B cell (primary cell): ENCODE measurements at regions of chr14 and their contacts with region 1.

Region 1: GRCh38 chr14:20855652-20856291 is 35.4 kb upstream of the RNASE3 start:
- DNase-seq: peak; percentile 84
- ATAC-seq: peak; percentile 99
- H3K4me3 ChIP-seq: no peak overlapping the region
- H3K4me3 Mint-ChIP-seq: no peak overlapping the region
- H3K27ac ChIP-seq: no peak overlapping the region
- H3K27ac Mint-ChIP-seq: no peak overlapping the region
- H3K4me1 ChIP-seq: peaks cover 3 to 7% of the 10 kb centered on the region in 2 donors
- H3K4me1 Mint-ChIP-seq: peaks cover 11% of the 10 kb centered on the region
- H3K27me3 ChIP-seq: peaks cover 0 to 18% (median 12%) of the 10 kb centered on the region in 4 experiments
- H3K27me3 Mint-ChIP-seq: peaks cover 30% of the 10 kb centered on the region
- CTCF ChIP-seq: peak; percentile 86

Region 2: DNA sequence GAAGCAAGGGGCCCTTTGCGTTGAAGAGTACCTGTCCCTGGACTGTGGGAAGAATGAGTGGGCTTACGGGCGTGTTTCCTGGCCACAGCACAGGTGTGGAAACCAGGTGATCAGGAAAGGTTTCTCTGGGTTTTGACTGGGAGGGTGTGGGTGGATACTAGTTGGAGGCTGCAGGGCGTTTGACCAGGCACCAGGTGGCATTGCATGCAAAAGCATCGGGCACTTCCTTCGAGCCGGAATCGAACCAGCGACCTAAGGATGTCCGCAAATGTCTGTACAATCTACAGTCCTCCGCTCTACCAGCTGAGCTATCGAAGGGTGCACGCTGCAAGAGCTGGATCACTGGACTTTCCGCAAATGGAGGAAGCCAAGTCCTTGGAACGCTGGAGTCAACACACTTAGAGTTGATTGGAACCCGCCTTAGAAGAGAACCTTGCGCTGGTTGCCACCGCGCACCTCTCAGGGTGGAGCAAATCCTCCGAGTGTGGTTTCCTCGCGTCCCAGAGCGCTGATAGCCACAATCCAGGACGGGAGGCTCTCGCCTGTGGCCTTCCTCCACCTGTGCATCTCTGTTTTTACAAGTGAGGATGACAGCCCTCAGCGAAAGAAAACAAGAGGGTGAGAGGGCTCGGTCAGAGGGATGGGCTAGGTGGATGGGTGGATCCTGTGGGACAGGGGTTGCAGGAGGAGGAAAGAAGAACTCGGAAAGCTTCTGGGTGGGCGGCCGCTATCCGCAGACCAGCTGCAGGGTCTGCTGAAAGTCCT is 192.6 kb before region 1 on chr14:
- CTCF ChIA-PET with region 1: interaction called, 8 read pairs
- POLR2A ChIA-PET with region 1: no interaction called
- intact Hi-C with region 1: loop called (anchors 1 kb)
- DNase-seq: peak; percentile 90
- ATAC-seq: peak; percentile 85
- H3K4me3 ChIP-seq: peak overlapping the region; percentile 30 to 93 (median 64)
- H3K4me3 Mint-ChIP-seq: peak overlapping the region; percentile 93
- H3K27ac ChIP-seq: peak overlapping the region in 1 of 2 donors; percentile 34
- H3K27ac Mint-ChIP-seq: peak overlapping the region; percentile 62
- H3K4me1 ChIP-seq: peaks cover 39 to 55% of the 10 kb centered on the region in 2 donors
- H3K4me1 Mint-ChIP-seq: peaks cover 53% of the 10 kb centered on the region
- H3K27me3 ChIP-seq: peaks cover 0 to 7% (median 0%) of the 10 kb centered on the region in 4 experiments
- H3K27me3 Mint-ChIP-seq: no peaks in the 10 kb centered on the region
- CTCF ChIP-seq: peak; percentile 71

Region 3: GRCh38 chr14:20697273-20698017 is 158.3 kb before region 1 on chr14:
- CTCF ChIA-PET with region 1: interaction called, 140 read pairs
- POLR2A ChIA-PET with region 1: no interaction called
- intact Hi-C with region 1: loop called (anchors 1 kb)
- DNase-seq: peak; percentile 81
- ATAC-seq: peak; percentile 86
- H3K4me3 ChIP-seq: no peak overlapping the region
- H3K4me3 Mint-ChIP-seq: no peak overlapping the region
- H3K27ac ChIP-seq: no peak overlapping the region
- H3K27ac Mint-ChIP-seq: no peak overlapping the region
- H3K4me1 ChIP-seq: no peaks in the 10 kb centered on the region
- H3K4me1 Mint-ChIP-seq: peaks cover 6% of the 10 kb centered on the region
- H3K27me3 ChIP-seq: no peaks in the 10 kb centered on the region
- H3K27me3 Mint-ChIP-seq: no peaks in the 10 kb centered on the region
- CTCF ChIP-seq: peak; percentile 88

Region 4: DNA sequence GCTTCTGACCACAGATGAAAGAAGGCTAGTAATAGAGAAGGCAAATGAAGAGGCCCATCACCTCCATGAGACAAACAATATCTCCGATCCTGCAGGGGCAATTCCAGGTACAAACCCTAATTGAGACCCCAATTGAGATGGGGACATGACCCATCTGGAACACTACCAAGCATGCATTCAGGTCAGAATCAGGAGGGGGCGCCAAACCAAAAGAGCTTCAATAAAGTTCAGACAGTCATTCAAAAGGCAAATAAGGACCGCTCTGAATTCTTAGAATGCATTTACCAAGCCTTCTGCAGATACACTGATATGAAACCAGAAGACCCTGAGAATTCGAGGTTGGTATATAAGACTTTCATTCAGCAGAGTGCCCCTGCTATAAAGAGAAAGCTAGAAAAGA is 97.8 kb before region 1 on chr14:
- CTCF ChIA-PET with region 1: interaction called, 51 read pairs
- POLR2A ChIA-PET with region 1: no interaction called
- intact Hi-C with region 1: loop called (anchors 1 kb)
- DNase-seq: peak; percentile 60
- ATAC-seq: peak; percentile 28
- H3K4me3 ChIP-seq: no peak overlapping the region
- H3K4me3 Mint-ChIP-seq: no peak overlapping the region
- H3K27ac ChIP-seq: no peak overlapping the region
- H3K27ac Mint-ChIP-seq: no peak overlapping the region
- H3K4me1 ChIP-seq: no peaks in the 10 kb centered on the region
- H3K4me1 Mint-ChIP-seq: peaks cover 4% of the 10 kb centered on the region
- H3K27me3 ChIP-seq: no peaks in the 10 kb centered on the region
- H3K27me3 Mint-ChIP-seq: peaks cover 4% of the 10 kb centered on the region
- CTCF ChIP-seq: peak; percentile 46

Region 5: DNA sequence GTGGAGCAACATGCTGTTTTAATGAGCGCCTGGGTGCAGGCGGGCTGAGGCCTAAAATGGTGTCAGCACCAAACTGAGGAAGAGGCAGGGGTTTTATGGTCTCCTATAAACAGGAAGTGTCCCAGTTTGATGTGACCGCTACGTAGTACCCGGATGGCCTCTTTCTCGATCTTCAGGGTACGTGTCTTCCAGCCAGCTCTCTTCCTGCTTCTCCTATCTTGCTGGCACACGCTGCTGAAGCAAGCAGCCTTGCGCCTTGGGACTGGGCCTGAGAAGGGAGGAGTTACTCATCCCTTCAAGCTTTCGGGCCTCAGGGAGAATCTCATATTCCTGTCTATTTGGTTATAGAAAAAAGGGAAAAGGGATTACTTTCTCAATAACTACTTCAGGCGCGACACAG is 24.9 kb before region 1 on chr14:
- CTCF ChIA-PET with region 1: no interaction called
- POLR2A ChIA-PET with region 1: no interaction called
- intact Hi-C with region 1: no loop called
- DNase-seq: no peak
- ATAC-seq: no peak
- H3K4me3 ChIP-seq: no peak overlapping the region
- H3K4me3 Mint-ChIP-seq: no peak overlapping the region
- H3K27ac ChIP-seq: no peak overlapping the region
- H3K27ac Mint-ChIP-seq: no peak overlapping the region
- H3K4me1 ChIP-seq: no peaks in the 10 kb centered on the region
- H3K4me1 Mint-ChIP-seq: no peaks in the 10 kb centered on the region
- H3K27me3 ChIP-seq: no peaks in the 10 kb centered on the region
- H3K27me3 Mint-ChIP-seq: peaks cover 6% of the 10 kb centered on the region
- CTCF ChIP-seq: no peak

Region 6: GRCh38 chr14:20866963-20867362 is 11.2 kb after region 1 on chr14:
- CTCF ChIA-PET with region 1: interaction called, 32 read pairs
- POLR2A ChIA-PET with region 1: no interaction called
- intact Hi-C with region 1: no loop called
- DNase-seq: no peak
- ATAC-seq: no peak
- H3K4me3 ChIP-seq: no peak overlapping the region
- H3K4me3 Mint-ChIP-seq: no peak overlapping the region
- H3K27ac ChIP-seq: no peak overlapping the region
- H3K27ac Mint-ChIP-seq: no peak overlapping the region
- H3K4me1 ChIP-seq: no peaks in the 10 kb centered on the region
- H3K4me1 Mint-ChIP-seq: no peaks in the 10 kb centered on the region
- H3K27me3 ChIP-seq: peaks cover 0 to 14% (median 5%) of the 10 kb centered on the region in 4 experiments
- H3K27me3 Mint-ChIP-seq: peaks cover 31% of the 10 kb centered on the region
- CTCF ChIP-seq: peak; percentile 28